ENCODE measurements at regions of chr10 and their contacts with region 1.

Region 1: GRCh38 chr10:110304780-110305421 is at the start of gene SMNDC1:
- DNase-seq: peak; percentile 94 to 97
- ATAC-seq: peak; percentile 93 to 96
- H3K4me3 ChIP-seq: peak within 1 kb of the TSS; percentile 74 to 88 (median 86)
- H3K27ac ChIP-seq: peak within 1 kb of the TSS; percentile 91 to 95 (median 94)
- H3K4me1 ChIP-seq: peaks cover 42 to 45% of the 10 kb centered on the region in 2 donors
- H3K27me3 ChIP-seq: no peaks in the 10 kb centered on the region
- CTCF ChIP-seq: no peak
- POLR2A ChIP-seq: peak; percentile 68 to 69
- total RNA-seq, gene SMNDC1: 7.3 to 23.9 (median 10.0) TPM

Region 2: GRCh38 chr10:110007701-110008517 is 297.0 kb before region 1 on chr10 and contains the start of gene ADD3:
- in situ Hi-C with region 1: no loop called
- intact Hi-C with region 1: loop called (anchors 10 kb)
- DNase-seq: peak; percentile 85
- ATAC-seq: peak; percentile 75 to 80
- H3K4me3 ChIP-seq: peak within 1 kb of the TSS; percentile 89 to 98 (median 94)
- H3K27ac ChIP-seq: peak within 1 kb of the TSS; percentile 82 to 89 (median 86)
- H3K4me1 ChIP-seq: peaks cover 11 to 19% of the 10 kb centered on the region in 2 donors
- H3K27me3 ChIP-seq: no peaks in the 10 kb centered on the region
- CTCF ChIP-seq: no peak
- POLR2A ChIP-seq: peak; percentile 26 to 59
- total RNA-seq, gene ADD3: 16.0 to 31.3 (median 18.4) TPM

Region 3: GRCh38 chr10:110376021-110376766 is 71.3 kb after region 1 on chr10:
- in situ Hi-C with region 1: no loop called
- intact Hi-C with region 1: no loop called
- DNase-seq: no peak
- ATAC-seq: no peak
- H3K4me3 ChIP-seq: no peak overlapping the region
- H3K27ac ChIP-seq: no peak overlapping the region
- H3K4me1 ChIP-seq: no peaks in the 10 kb centered on the region
- H3K27me3 ChIP-seq: no peaks in the 10 kb centered on the region
- CTCF ChIP-seq: no peak
- POLR2A ChIP-seq: no peak

Region 4: DNA sequence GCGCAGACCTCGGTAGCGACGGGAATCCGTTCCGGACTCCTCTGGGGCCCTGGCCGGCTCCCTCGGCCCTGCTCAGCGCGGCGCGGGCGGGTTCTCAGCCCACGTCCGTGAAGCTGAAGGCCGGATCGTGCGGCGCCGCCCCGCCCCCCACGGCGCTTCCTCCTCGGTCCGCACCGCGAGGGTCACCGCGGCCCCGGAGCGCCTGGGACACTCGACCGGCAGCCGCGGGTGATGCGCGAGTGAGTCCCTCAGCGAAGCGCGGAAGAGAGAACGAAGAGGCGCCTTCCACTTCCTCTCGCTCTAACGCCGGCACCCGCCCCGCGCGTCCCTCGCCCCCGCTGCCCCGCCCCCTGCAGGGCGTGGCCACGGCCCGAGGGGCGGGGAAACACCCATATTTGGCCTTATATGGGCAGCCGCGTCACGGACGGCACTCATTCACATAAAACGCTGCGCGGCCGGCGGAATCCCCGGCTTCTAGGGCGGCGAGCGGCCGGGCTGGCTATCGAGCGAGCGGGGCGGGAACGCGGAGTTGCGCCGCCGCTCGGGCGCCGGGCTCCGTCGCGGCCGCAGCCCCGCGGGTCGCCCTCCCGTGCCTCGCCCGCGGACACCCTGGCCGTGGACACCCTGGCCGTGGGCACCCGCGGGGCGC is 192.7 kb after region 1 on chr10 and contains the start of gene DUSP5:
- in situ Hi-C with region 1: no loop called
- intact Hi-C with region 1: loop called (anchors 5 kb)
- DNase-seq: peak; percentile 81 to 87
- ATAC-seq: peak; percentile 92 to 94
- H3K4me3 ChIP-seq: peak within 1 kb of the TSS; percentile 66 to 89 (median 83)
- H3K27ac ChIP-seq: peak within 1 kb of the TSS; percentile 67 to 83 (median 81)
- H3K4me1 ChIP-seq: peaks cover 8 to 18% of the 10 kb centered on the region in 2 donors
- H3K27me3 ChIP-seq: peaks cover 8 to 12% (median 8%) of the 10 kb centered on the region in 3 donors
- CTCF ChIP-seq: peak in 1 of 5 experiments; percentile 8
- POLR2A ChIP-seq: peak; percentile 83 to 96
- total RNA-seq, gene DUSP5: 0.75 to 2.8 (median 2.5) TPM in 3 of 4 donors, not detected in the other

Region 5: DNA sequence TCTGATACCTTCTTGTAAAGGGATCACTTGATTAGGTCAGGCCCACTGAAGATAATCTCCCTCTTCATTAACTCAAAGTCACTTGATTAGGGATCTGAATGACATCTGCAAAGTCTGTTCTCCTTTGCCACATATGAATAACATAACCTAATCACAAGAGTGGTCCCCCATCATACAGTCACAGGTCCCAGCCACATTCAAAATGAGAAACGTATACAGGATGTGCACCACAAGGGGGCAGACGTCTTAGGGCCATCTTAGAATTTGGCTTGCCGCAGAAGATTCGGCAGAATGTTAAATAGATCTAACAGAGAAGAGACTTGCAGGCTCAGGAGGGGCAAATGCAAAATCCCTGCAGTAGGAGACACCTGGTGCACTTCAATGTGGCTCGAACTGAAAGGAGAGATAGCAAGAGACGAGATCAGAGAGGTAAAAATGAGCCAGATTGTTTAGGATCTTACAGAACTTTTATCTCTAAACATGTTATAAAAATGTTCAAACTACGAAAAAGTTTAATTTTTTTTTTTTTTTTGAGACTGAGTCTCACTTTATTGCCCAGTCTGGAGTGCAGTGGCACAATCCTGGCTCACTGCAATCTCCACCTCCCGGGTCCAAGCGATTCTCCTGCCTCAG is 252.2 kb after region 1 on chr10:
- in situ Hi-C with region 1: loop called in 2 of 4 experiments (anchors 5 to 10 kb)
- intact Hi-C with region 1: no loop called
- DNase-seq: no peak
- ATAC-seq: no peak
- H3K4me3 ChIP-seq: no peak overlapping the region
- H3K27ac ChIP-seq: no peak overlapping the region
- H3K4me1 ChIP-seq: no peaks in the 10 kb centered on the region
- H3K27me3 ChIP-seq: peaks cover 0 to 5% (median 4%) of the 10 kb centered on the region in 3 donors
- CTCF ChIP-seq: peak in 3 of 5 experiments; percentile 21 to 63 (median 50)
- POLR2A ChIP-seq: no peak

Region 6: GRCh38 chr10:110567201-110568054 is 262.5 kb after region 1 on chr10 and contains the start of gene SMC3:
- in situ Hi-C with region 1: no loop called
- intact Hi-C with region 1: loop called (anchors 2 kb)
- DNase-seq: peak; percentile 82 to 87
- ATAC-seq: peak; percentile 95 to 96
- H3K4me3 ChIP-seq: peak within 1 kb of the TSS; percentile 86 to 100 (median 93)
- H3K27ac ChIP-seq: peak within 1 kb of the TSS; percentile 93 to 99 (median 96)
- H3K4me1 ChIP-seq: peaks cover 36% of the 10 kb centered on the region in 2 donors
- H3K27me3 ChIP-seq: peaks cover 0 to 5% (median 2%) of the 10 kb centered on the region in 3 donors
- CTCF ChIP-seq: no peak
- POLR2A ChIP-seq: peak; percentile 63 to 65
- total RNA-seq, gene SMC3: 19.5 to 25.9 (median 21.9) TPM

Region 7: DNA sequence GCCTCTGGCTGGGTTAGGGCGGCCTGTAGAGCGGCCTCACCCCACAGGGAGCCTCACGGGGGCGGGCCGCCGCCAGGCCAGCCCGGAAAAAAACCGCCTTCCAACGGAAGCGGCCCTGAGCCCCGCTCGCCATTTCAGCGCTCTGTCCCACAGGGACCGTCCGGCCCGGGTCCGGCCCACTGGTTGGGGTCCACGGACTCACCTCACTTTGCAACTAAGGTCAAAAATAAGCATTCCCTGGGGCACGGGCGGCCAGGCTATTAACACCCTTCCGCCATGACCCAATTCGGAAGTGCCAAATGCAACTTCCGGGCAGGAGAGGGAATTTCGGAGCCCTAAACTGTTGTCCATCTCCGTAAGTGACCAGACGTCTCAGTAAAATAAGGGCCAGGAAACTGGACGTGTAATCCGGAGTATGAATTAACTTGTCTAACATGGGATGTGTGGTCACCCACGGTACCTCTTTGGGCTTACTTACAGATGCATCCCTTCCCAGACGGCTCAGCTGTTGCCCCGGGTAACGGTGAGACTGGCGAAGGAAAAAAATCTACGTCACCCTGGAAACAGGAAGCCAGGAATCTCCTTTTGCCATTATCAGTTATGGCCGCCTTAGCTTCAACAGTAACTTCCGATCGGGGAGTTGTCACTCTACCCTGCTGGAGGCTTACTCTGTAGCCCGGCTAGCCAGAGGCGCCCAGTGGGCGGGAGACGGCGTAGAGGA is 613.9 kb after region 1 on chr10 and contains the start of gene BBIP1:
- in situ Hi-C with region 1: loop called in 1 of 4 experiments (anchors 25 kb)
- intact Hi-C with region 1: no loop called
- DNase-seq: no peak
- ATAC-seq: peak; percentile 89 to 92
- H3K4me3 ChIP-seq: peak within 1 kb of the TSS; percentile 73 to 96 (median 92)
- H3K27ac ChIP-seq: peak within 1 kb of the TSS; percentile 95 to 100 (median 98)
- H3K4me1 ChIP-seq: peaks cover 37 to 45% of the 10 kb centered on the region in 2 donors
- H3K27me3 ChIP-seq: no peaks in the 10 kb centered on the region
- CTCF ChIP-seq: peak in 1 of 5 experiments; percentile 1
- POLR2A ChIP-seq: peak; percentile 61 to 63
- total RNA-seq, gene BBIP1: 8.9 to 15.3 (median 11.7) TPM